K562 (cell line): ENCODE measurements at regions of chr11 and their contacts with region 1.

Region 1: DNA sequence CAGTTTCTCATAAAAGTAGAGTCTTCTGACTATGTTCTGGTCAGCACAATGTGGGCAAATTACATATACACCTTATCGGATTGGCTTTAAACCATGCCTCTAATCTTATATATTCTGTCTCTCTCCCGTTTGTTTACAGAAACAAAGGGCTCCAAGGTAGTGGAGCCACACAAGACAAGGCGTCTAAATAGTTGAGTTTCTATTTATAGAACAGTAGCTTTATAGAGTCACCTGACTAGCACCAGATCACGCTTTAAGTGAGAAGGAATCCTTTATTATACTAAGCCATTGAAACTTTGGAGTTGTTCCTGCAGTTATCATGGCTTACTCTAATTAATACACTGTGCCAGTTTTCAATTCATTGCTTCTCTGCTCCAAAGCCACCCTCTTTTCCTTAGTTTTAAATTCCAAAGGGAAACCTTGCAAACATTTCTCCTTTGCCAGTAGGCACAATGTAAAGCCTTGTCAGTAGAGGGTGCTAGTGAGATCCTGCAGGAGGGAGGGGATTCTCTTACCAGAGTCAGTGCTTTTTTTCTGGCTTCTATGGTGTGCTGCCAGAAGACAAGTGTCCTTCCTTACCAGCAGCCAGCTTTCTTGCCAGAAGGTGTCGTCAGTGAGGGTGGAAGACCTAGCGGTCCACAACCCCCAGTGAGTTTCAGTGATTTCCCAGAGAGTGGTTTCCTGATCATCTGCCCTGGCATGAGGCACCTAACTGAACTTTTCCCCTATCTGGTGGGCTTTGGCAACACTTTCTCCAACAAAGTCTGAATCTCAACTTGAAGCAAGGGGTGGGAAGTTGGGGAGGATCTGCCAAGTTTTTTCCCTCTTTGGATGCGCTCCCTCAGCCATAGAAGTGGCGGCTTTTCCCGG is 71.7 kb downstream of the RAB38 start:
- DNase-seq: peak; percentile 33 to 73 (median 48)
- ATAC-seq: peak; percentile 99
- H3K4me3 ChIP-seq: no peak overlapping the region
- H3K27ac ChIP-seq: no peak overlapping the region
- H3K4me1 ChIP-seq: no peaks in the 10 kb centered on the region
- H3K27me3 ChIP-seq: no peaks in the 10 kb centered on the region
- CTCF ChIP-seq: peak; percentile 84 to 85 (median 84)
- EP300 ChIP-seq: no peak
- POLR2A ChIP-seq: no peak
- RAD21 ChIP-seq: peak; percentile 77 to 82

Region 2: GRCh38 chr11:87954476-87954875 is 149.1 kb before region 1 on chr11:
- CTCF ChIA-PET with region 1: no interaction called
- POLR2A ChIA-PET with region 1: no interaction called
- in situ Hi-C with region 1: no loop called
- intact Hi-C with region 1: no loop called
- DNase-seq: no peak
- ATAC-seq: no peak
- H3K4me3 ChIP-seq: no peak overlapping the region
- H3K27ac ChIP-seq: no peak overlapping the region
- H3K4me1 ChIP-seq: no peaks in the 10 kb centered on the region
- H3K27me3 ChIP-seq: no peaks in the 10 kb centered on the region
- CTCF ChIP-seq: no peak
- EP300 ChIP-seq: no peak
- POLR2A ChIP-seq: no peak
- RAD21 ChIP-seq: no peak

Region 3: GRCh38 chr11:88016392-88017170 is 87.0 kb before region 1 on chr11:
- CTCF ChIA-PET with region 1: no interaction called
- POLR2A ChIA-PET with region 1: no interaction called
- in situ Hi-C with region 1: no loop called
- intact Hi-C with region 1: loop called (anchors 1 kb)
- DNase-seq: peak; percentile 12 to 73 (median 22)
- ATAC-seq: peak; percentile 91
- H3K4me3 ChIP-seq: no peak overlapping the region
- H3K27ac ChIP-seq: no peak overlapping the region
- H3K4me1 ChIP-seq: no peaks in the 10 kb centered on the region
- H3K27me3 ChIP-seq: no peaks in the 10 kb centered on the region
- CTCF ChIP-seq: peak; percentile 49 to 76 (median 68)
- EP300 ChIP-seq: no peak
- POLR2A ChIP-seq: no peak
- RAD21 ChIP-seq: peak; percentile 87 to 88

Region 4: DNA sequence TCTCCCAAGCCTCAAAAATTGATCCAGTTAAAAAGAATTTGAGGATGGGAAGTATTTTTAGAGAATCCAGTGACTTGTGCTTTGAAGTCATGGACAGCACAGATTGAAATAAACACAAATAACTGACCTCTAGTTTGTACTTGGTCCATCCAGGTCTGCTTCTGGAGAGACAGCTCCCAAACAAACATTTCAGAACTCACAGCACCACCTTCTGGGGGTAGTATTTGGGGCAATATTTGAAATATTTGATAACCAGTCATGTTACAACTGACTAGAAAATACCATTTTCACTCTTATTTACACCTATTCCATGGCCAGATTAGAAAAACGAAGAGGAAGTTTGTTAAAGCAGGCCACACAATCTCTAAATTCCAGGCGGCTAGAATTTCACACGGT is 177.7 kb after region 1 on chr11:
- CTCF ChIA-PET with region 1: no interaction called
- POLR2A ChIA-PET with region 1: no interaction called
- in situ Hi-C with region 1: no loop called
- intact Hi-C with region 1: loop called (anchors 5 kb)
- DNase-seq: no peak
- ATAC-seq: no peak
- H3K4me3 ChIP-seq: no peak overlapping the region
- H3K27ac ChIP-seq: no peak overlapping the region
- H3K4me1 ChIP-seq: no peaks in the 10 kb centered on the region
- H3K27me3 ChIP-seq: no peaks in the 10 kb centered on the region
- CTCF ChIP-seq: peak in 2 of 3 experiments; percentile 12 to 24; a peak in 2 of 6 replicates
- EP300 ChIP-seq: no peak
- POLR2A ChIP-seq: no peak
- RAD21 ChIP-seq: 0 out of 4 replicates have a peak, but pooled peaks of 1 of the 2 experiments have one; percentile 13

Region 5: GRCh38 chr11:88434336-88434976 is 330.9 kb after region 1 on chr11:
- CTCF ChIA-PET with region 1: no interaction called
- POLR2A ChIA-PET with region 1: no interaction called
- in situ Hi-C with region 1: no loop called
- intact Hi-C with region 1: loop called (anchors 1 kb)
- DNase-seq: peak in 3 of 4 experiments; percentile 23 to 59 (median 25)
- ATAC-seq: peak; percentile 90
- H3K4me3 ChIP-seq: no peak overlapping the region
- H3K27ac ChIP-seq: no peak overlapping the region
- H3K4me1 ChIP-seq: peaks cover 0 to 23% of the 10 kb centered on the region in 2 experiments; a peak in 3 of 5 replicates
- H3K27me3 ChIP-seq: no peaks in the 10 kb centered on the region
- CTCF ChIP-seq: peak; percentile 49 to 95 (median 89); a peak in 5 of 6 replicates
- EP300 ChIP-seq: no peak
- POLR2A ChIP-seq: no peak
- RAD21 ChIP-seq: peak; percentile 81 to 86

Region 6: DNA sequence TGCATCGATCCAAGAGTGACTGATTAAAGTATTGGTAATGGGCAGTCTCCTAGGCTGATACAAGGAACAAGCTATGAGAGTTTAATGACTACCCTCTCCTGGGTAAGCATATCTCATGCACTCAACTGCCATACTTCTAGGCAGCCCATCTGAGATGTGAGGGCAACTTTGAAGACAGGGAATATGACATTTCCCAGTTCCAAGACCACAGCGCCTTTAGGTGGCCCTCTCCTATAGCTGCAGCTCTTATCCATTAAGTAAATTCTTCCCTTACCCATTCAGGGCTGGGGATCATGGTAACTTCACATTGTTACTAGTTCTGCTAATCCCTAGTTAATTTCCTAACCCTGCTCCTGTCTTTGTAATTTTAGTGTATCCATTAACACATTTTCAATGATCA is 391.3 kb after region 1 on chr11:
- CTCF ChIA-PET with region 1: interaction called, 7 read pairs
- POLR2A ChIA-PET with region 1: no interaction called
- in situ Hi-C with region 1: no loop called
- intact Hi-C with region 1: loop called (anchors 1 kb)
- DNase-seq: peak in 2 of 4 experiments; percentile 10 to 35
- ATAC-seq: peak; percentile 92
- H3K4me3 ChIP-seq: no peak overlapping the region
- H3K27ac ChIP-seq: no peak overlapping the region
- H3K4me1 ChIP-seq: no peaks in the 10 kb centered on the region
- H3K27me3 ChIP-seq: no peaks in the 10 kb centered on the region
- CTCF ChIP-seq: peak; percentile 21 to 57 (median 33); a peak in 3 of 6 replicates
- EP300 ChIP-seq: no peak
- POLR2A ChIP-seq: no peak
- RAD21 ChIP-seq: peak; percentile 25 to 67; a peak in 3 of 4 replicates